ENCODE measurements at regions of chr19 and their contacts with region 1.

Region 1: GRCh38 chr19:4139614-4140236 is 13.7 kb upstream of the CREB3L3 start:
- DNase-seq: peak; percentile 82
- H3K4me3 ChIP-seq: peak overlapping the region in 1 of 2 experiments; percentile 9; a peak in 1 of 4 replicates
- H3K27ac ChIP-seq: no peak overlapping the region
- H3K4me1 ChIP-seq: no peaks in the 10 kb centered on the region
- H3K27me3 ChIP-seq: no peaks in the 10 kb centered on the region
- CTCF ChIP-seq: peak; percentile 72
- EP300 ChIP-seq: no peak
- RAD21 ChIP-seq: peak; percentile 52

Region 2: GRCh38 chr19:4115050-4115817 is 24.5 kb before region 1 on chr19:
- CTCF ChIA-PET with region 1: interaction called, 26 read pairs
- POLR2A ChIA-PET with region 1: no interaction called
- DNase-seq: peak; percentile 7
- H3K4me3 ChIP-seq: no peak overlapping the region
- H3K27ac ChIP-seq: no peak overlapping the region
- H3K4me1 ChIP-seq: no peaks in the 10 kb centered on the region
- H3K27me3 ChIP-seq: no peaks in the 10 kb centered on the region
- CTCF ChIP-seq: no peak
- EP300 ChIP-seq: no peak
- RAD21 ChIP-seq: no peak

Region 3: DNA sequence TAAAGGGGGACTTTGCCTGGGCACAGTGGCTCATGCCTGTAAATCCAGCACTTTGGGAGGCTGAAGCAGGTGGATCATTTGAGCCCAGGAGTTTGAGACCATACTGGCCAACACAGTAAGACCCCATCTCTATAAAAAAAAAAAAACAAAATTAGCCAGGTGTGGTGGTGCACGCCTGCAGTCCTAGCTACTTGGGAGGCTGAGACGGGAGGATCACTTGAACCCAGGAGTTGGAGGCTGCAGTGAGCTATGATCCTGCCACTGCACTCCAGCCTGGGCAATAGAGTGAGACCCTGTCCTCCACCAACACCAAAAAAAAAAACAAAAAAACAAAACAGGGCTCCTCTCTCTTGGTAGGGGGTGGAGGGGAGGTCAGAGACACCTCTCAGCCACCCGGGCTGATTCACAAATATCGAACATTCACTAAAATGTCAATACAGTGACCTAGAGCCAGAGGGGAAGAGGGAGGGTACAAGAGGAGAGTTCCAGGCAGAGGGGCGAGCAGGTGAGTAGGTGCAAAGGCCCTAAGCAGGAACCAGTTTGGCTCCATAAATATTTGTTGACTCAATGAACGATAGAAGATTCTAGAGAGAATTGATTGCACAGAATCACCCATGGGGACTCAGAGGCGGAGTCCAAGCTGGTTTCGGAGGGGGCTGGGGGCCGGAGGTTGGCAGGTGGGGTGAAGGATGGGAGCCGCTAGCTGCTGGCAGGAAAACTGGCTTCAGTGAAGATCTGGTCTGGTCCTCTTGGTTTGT is 12.7 kb after region 1 on chr19:
- CTCF ChIA-PET with region 1: interaction called, 38 read pairs
- POLR2A ChIA-PET with region 1: no interaction called
- DNase-seq: peak; percentile 19
- H3K4me3 ChIP-seq: no peak overlapping the region
- H3K27ac ChIP-seq: no peak overlapping the region
- H3K4me1 ChIP-seq: no peaks in the 10 kb centered on the region
- H3K27me3 ChIP-seq: peaks cover 15% of the 10 kb centered on the region; the same call in 1 of the 2 replicates
- CTCF ChIP-seq: no peak
- EP300 ChIP-seq: no peak
- RAD21 ChIP-seq: no peak

Region 4: DNA sequence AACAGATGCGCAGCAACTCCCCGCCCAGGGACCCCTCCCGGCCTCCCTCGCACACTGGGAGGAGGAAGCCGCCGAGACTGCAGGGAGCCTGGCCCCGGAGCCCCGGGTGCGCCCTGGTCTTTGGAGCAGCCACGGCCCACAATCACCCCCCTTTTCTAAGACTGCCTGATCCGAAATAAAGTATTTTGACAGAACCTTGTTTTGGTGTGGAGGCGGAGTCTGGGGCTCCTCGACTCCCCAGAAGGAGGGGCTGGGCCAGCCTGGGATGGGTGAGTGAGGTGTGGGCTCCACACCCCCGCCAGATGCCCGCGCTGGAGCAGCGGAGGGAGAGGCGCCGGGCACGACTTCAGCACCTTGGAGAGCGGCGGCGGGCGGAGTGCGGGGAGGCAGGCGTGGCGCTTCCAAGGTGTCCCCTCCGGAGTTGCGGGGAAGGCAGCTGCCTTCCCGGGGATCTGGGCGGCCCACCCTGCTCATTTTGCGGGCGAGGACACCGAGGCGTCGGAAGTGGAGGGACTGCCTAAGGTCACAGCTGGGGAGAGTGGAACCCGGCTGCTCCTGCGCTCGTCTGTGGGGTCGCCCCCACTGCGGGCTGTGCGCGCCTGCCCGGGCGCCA is 33.2 kb after region 1 on chr19:
- CTCF ChIA-PET with region 1: interaction called, 26 read pairs
- POLR2A ChIA-PET with region 1: no interaction called
- DNase-seq: peak; percentile 84
- H3K4me3 ChIP-seq: peak overlapping the region; percentile 24 to 44; a peak in 1 of 4 replicates
- H3K27ac ChIP-seq: no peak overlapping the region
- H3K4me1 ChIP-seq: peaks cover 0 to 8% of the 10 kb centered on the region in 2 experiments; a peak in 1 of 4 replicates
- H3K27me3 ChIP-seq: peaks cover 16% of the 10 kb centered on the region
- CTCF ChIP-seq: no peak
- EP300 ChIP-seq: no peak
- RAD21 ChIP-seq: no peak

Region 5: DNA sequence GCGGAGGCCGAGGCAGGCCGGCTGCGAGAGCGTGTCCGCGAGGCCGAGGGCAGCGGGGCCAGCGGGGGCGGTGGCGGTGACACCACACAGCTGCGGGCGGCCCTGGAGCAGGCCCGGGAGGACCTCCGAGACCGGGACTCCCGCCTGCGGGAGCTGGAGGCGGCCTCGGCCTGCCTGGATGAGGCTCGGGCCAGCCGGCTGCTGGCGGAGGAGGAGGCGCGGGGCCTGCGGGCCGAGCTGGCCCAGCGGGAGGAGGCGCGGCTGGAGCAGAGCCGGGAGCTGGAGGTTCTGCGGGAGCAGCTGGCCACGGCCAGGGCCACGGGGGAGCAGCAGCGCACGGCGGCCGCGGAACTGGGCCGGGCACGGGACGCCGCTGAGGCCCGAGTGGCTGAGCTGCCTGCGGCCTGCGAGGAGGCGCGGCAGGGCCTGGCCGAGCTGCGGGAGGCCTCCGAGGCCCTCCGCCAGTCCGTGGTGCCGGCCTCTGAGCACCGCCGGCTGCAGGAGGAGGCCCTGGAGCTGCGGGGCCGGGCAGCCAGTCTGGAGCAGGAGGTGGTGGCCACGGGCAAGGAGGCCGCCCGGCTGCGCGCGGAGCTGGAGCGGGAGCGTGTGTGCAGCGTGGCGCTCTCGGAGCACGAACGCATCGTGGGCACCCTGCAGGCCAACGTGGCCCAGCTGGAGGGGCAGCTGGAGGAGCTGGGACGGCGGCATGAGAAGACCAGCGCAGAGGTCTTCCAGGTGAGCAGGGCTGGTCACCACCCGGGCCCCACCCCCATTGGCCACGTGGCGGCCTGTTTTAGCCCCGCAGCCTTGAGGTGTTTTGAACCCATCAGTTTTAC is 77.9 kb after region 1 on chr19:
- CTCF ChIA-PET with region 1: interaction called, 10 read pairs
- POLR2A ChIA-PET with region 1: no interaction called
- DNase-seq: no peak
- H3K4me3 ChIP-seq: no peak overlapping the region
- H3K27ac ChIP-seq: no peak overlapping the region
- H3K4me1 ChIP-seq: no peaks in the 10 kb centered on the region
- H3K27me3 ChIP-seq: peaks cover 9% of the 10 kb centered on the region
- CTCF ChIP-seq: no peak
- EP300 ChIP-seq: no peak
- RAD21 ChIP-seq: no peak

Measured in SK-N-SH (cell line).